Uterus (tissue), 4 donors: ENCODE measurements at regions of chr9 and their contacts with region 1.

Region 1: GRCh38 chr9:130343445-130343918 is 77.9 kb downstream of the HMCN2 start:
- DNase-seq: no peak
- H3K4me3 ChIP-seq: no peak overlapping the region
- H3K27ac ChIP-seq: no peak overlapping the region
- H3K4me1 ChIP-seq: no peaks in the 10 kb centered on the region
- H3K27me3 ChIP-seq: no peaks in the 10 kb centered on the region
- CTCF ChIP-seq: peak; percentile 65 to 93 (median 82)
- POLR2A ChIP-seq: no peak

Region 2: GRCh38 chr9:130107234-130107861 is 236.1 kb before region 1 on chr9:
- intact Hi-C with region 1: loop called (anchors 10 kb)
- DNase-seq: peak; percentile 87 to 94
- H3K4me3 ChIP-seq: no peak overlapping the region
- H3K27ac ChIP-seq: peak overlapping the region; percentile 71 to 84
- H3K4me1 ChIP-seq: no peaks in the 10 kb centered on the region
- H3K27me3 ChIP-seq: no peaks in the 10 kb centered on the region
- CTCF ChIP-seq: peak; percentile 85 to 88 (median 87)
- POLR2A ChIP-seq: no peak

Region 3: GRCh38 chr9:130243015-130243734 is 100.3 kb before region 1 on chr9:
- intact Hi-C with region 1: loop called (anchors 10 kb)
- DNase-seq: peak; percentile 78 to 82
- H3K4me3 ChIP-seq: no peak overlapping the region
- H3K27ac ChIP-seq: no peak overlapping the region
- H3K4me1 ChIP-seq: no peaks in the 10 kb centered on the region
- H3K27me3 ChIP-seq: no peaks in the 10 kb centered on the region
- CTCF ChIP-seq: peak; percentile 88 to 93 (median 90)
- POLR2A ChIP-seq: no peak

Region 4: DNA sequence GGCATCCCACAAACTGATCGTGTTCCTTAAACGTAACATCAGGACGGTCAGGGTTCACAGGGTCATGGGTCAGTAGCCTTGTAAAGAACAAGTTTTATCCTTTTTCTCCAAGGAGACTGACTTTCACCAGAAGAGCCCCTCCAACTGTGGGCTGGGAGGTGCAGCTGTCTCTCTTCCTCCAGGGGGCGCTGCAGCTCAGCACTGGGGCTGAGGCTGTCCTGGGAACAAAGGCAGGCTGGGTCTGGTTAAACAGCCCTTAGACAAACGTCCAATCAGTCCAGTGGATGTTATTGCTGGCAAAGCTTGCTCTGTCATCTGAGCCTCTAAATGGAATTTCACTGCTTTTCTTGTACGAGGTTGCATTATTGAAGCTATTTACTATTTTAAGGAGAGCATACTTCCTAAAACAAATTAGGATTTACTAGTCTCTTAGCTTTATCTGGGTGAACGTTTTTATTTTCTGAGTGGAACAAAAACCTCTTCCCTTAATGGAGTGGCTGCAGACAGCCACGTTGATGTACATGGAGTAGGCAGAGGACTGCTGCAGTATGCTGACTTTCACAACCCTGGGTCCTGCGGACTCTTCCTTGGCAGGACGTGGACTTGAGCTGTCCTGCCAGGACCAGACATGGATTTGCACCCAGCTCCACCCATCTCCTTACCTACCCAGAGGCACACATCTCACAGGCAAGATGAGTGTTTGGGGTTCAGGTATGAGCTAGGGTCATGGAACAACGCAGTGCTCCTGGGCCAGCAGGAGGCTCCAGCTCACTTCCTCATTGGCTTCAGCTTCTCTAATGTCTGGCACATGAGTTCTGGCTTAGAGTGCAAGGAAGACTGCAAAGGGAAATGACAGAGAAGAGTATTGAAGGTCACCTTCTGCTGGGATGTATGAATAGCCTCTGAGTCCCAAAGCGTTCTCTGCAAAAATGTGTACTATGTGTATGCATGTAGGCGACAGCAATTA is 357.9 kb after region 1 on chr9:
- intact Hi-C with region 1: no loop called
- DNase-seq: peak; percentile 60 to 66
- H3K4me3 ChIP-seq: no peak overlapping the region
- H3K27ac ChIP-seq: no peak overlapping the region
- H3K4me1 ChIP-seq: no peaks in the 10 kb centered on the region
- H3K27me3 ChIP-seq: no peaks in the 10 kb centered on the region
- CTCF ChIP-seq: peak; percentile 74 to 81 (median 81)
- POLR2A ChIP-seq: no peak